CD4-positive, alpha-beta T cell (primary cell): ENCODE measurements at regions of chr7 and their contacts with region 1.

Region 1: GRCh38 chr7:148962823-148963582 is 65.3 kb downstream of the PDIA4 start:
- DNase-seq: peak; percentile 42 to 85 (median 57)
- ATAC-seq: peak; percentile 66
- H3K4me3 ChIP-seq: peak overlapping the region; percentile 72
- H3K4me3 Mint-ChIP-seq: peak overlapping the region; percentile 94
- H3K27ac ChIP-seq: peak overlapping the region in 1 of 2 donors; percentile 80
- H3K27ac Mint-ChIP-seq: peak overlapping the region; percentile 89
- H3K4me1 ChIP-seq: peaks cover 28% of the 10 kb centered on the region
- H3K4me1 Mint-ChIP-seq: peaks cover 25% of the 10 kb centered on the region
- H3K27me3 ChIP-seq: no peaks in the 10 kb centered on the region
- H3K27me3 Mint-ChIP-seq: no peaks in the 10 kb centered on the region
- CTCF ChIP-seq: peak; percentile 95

Region 2: GRCh38 chr7:148255333-148255732 is 707.7 kb before region 1 on chr7:
- CTCF ChIA-PET with region 1: no interaction called
- POLR2A ChIA-PET with region 1: no interaction called
- intact Hi-C with region 1: loop called (anchors 5 to 10 kb)
- DNase-seq: no peak
- ATAC-seq: no peak
- H3K4me3 ChIP-seq: no peak overlapping the region
- H3K4me3 Mint-ChIP-seq: no peak overlapping the region
- H3K27ac ChIP-seq: no peak overlapping the region
- H3K27ac Mint-ChIP-seq: no peak overlapping the region
- H3K4me1 ChIP-seq: no peaks in the 10 kb centered on the region
- H3K4me1 Mint-ChIP-seq: no peaks in the 10 kb centered on the region
- H3K27me3 ChIP-seq: peaks cover 0 to 12% of the 10 kb centered on the region in 2 experiments
- H3K27me3 Mint-ChIP-seq: peaks cover 29% of the 10 kb centered on the region
- CTCF ChIP-seq: no peak

Region 3: GRCh38 chr7:148503875-148504487 is 459.0 kb before region 1 on chr7:
- CTCF ChIA-PET with region 1: interaction called, 12 read pairs
- POLR2A ChIA-PET with region 1: no interaction called
- intact Hi-C with region 1: loop called (anchors 1 kb)
- DNase-seq: peak in 3 of 14 experiments; percentile 55 to 66 (median 62)
- ATAC-seq: no peak
- H3K4me3 ChIP-seq: no peak overlapping the region
- H3K4me3 Mint-ChIP-seq: no peak overlapping the region
- H3K27ac ChIP-seq: no peak overlapping the region
- H3K27ac Mint-ChIP-seq: no peak overlapping the region
- H3K4me1 ChIP-seq: no peaks in the 10 kb centered on the region
- H3K4me1 Mint-ChIP-seq: peaks cover 7% of the 10 kb centered on the region
- H3K27me3 ChIP-seq: peaks cover 0 to 13% of the 10 kb centered on the region in 2 experiments
- H3K27me3 Mint-ChIP-seq: peaks cover 17% of the 10 kb centered on the region
- CTCF ChIP-seq: peak; percentile 90

Region 4: GRCh38 chr7:148773334-148773733 is 189.7 kb before region 1 on chr7:
- CTCF ChIA-PET with region 1: interaction called, 3 read pairs
- POLR2A ChIA-PET with region 1: interaction called, 3 read pairs
- intact Hi-C with region 1: loop called (anchors 2 to 5 kb)
- DNase-seq: peak in 12 of 14 experiments; percentile 7 to 73 (median 24)
- ATAC-seq: peak; percentile 92
- H3K4me3 ChIP-seq: no peak overlapping the region
- H3K4me3 Mint-ChIP-seq: peak overlapping the region; percentile 13
- H3K27ac ChIP-seq: peak overlapping the region; percentile 42 to 66
- H3K27ac Mint-ChIP-seq: peak overlapping the region; percentile 47
- H3K4me1 ChIP-seq: peaks cover 25% of the 10 kb centered on the region
- H3K4me1 Mint-ChIP-seq: peaks cover 29% of the 10 kb centered on the region
- H3K27me3 ChIP-seq: no peaks in the 10 kb centered on the region
- H3K27me3 Mint-ChIP-seq: no peaks in the 10 kb centered on the region
- CTCF ChIP-seq: no peak

Region 5: DNA sequence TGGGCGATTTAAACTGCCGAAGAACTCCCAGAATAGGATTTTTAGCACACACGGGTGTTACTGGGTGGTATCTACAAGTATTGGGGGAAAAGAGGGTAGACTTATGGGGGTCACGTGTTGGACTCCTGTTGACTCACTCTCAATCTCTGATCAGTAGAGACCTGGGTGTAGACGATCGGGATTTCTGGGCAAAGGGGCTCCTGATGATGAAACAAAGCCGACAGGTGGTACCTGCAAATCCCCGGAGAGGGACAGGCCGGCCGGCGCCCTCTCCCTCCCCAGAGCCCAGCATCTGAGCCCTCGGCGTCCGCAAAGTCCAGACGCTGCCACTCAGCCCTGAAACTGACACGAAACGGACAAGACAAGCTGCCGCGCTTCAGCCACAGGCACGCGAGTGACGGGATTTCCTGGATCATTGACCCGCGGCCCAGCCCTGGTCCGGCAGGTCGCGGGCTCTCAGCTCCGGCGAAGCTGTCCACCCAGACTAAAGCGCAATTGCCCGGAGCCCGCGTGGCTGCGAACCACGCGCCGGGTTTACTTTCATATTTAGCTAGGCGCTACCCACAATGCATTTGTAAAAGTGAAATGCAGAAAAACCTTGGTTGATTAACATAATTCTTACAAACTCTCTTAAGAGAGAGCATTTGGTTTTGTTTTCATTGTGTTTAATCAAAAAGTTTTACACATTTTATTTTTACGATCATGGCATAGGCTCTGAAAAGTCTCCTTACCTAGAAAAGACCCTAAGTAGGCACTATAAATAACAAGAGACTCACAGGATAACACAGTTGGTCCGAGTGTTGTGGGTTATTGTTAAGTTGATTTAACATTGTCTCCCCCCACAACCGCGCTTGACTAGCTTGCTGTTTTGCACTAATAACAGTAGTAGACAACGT is 22.1 kb before region 1 on chr7:
- CTCF ChIA-PET with region 1: interaction called, 15 read pairs
- POLR2A ChIA-PET with region 1: interaction called, 24 read pairs
- intact Hi-C with region 1: loop called (anchors 2 kb)
- DNase-seq: peak; percentile 37 to 87 (median 57)
- ATAC-seq: peak; percentile 69
- H3K4me3 ChIP-seq: peak overlapping the region; percentile 89
- H3K4me3 Mint-ChIP-seq: peak overlapping the region; percentile 97
- H3K27ac ChIP-seq: peak overlapping the region; percentile 87 to 88
- H3K27ac Mint-ChIP-seq: peak overlapping the region; percentile 98
- H3K4me1 ChIP-seq: peaks cover 7% of the 10 kb centered on the region
- H3K4me1 Mint-ChIP-seq: peaks cover 27% of the 10 kb centered on the region
- H3K27me3 ChIP-seq: no peaks in the 10 kb centered on the region
- H3K27me3 Mint-ChIP-seq: no peaks in the 10 kb centered on the region
- CTCF ChIP-seq: no peak

Region 6: DNA sequence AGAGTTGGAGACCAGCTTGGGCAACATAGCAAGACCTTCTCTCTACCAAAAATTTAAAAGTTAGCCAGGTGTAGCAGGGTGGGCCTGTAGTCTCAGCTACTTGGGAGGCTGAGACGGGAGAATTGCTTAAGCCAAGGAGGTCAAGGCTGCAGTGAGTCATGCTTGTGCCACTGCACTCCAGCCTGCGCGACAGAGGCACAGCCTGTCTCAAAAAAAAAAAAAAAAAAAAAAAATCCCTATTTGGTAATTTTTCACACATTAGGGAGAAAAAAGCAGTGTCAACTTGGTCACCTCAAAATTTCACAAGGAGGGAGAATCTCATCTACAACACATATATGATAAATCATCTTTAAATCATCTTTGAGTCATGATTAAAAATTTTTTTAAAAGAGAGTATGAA is 177.8 kb after region 1 on chr7:
- CTCF ChIA-PET with region 1: no interaction called
- POLR2A ChIA-PET with region 1: no interaction called
- intact Hi-C with region 1: no loop called
- DNase-seq: peak in 1 of 14 experiments; percentile 33
- ATAC-seq: no peak
- H3K4me3 ChIP-seq: no peak overlapping the region
- H3K4me3 Mint-ChIP-seq: no peak overlapping the region
- H3K27ac ChIP-seq: no peak overlapping the region
- H3K27ac Mint-ChIP-seq: no peak overlapping the region
- H3K4me1 ChIP-seq: peaks cover 11% of the 10 kb centered on the region
- H3K4me1 Mint-ChIP-seq: peaks cover 16% of the 10 kb centered on the region
- H3K27me3 ChIP-seq: no peaks in the 10 kb centered on the region
- H3K27me3 Mint-ChIP-seq: no peaks in the 10 kb centered on the region
- CTCF ChIP-seq: no peak